Spleen (tissue), 13 donors: ENCODE measurements at regions of chr11 and their contacts with region 1.

Region 1: DNA sequence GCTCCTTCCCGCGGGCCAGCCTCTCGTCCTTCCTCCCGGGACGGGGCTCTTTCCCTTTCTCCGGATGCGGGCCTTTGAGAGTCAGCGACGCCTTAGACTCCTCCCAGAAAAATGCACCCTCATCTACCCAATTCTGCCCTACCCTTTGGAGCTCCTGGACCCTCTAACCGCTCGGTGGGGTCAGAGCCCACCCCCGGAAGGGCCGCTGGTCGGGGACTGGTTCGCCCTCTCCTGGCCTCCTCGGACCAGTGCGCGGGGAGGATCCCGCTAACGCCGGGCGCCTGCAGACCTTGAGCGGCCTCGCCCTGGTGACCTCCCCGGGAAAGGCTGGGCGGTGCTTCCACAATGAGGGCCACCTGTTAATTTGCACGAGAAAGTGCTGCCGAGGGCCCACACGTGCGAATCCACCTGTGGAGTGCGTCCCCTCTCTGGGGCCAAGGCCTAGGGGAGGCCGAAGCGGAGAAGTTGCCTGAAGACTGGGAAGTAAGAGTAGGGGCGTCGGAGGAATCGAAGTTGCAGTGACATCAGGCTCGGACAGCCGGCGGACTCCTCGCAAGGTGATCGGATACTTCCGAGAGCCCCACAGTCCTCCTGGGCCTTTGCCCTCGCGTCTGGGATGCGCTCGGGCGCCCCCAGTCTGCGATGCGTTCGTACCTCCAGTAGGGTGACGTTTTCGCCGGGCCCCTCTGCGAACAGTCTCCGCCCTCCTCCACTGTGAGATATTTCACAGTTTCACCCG is 61.5 kb downstream of the ENDOD1 start:
- DNase-seq: peak; percentile 97
- H3K4me3 ChIP-seq: peak overlapping the region; percentile 58 to 83 (median 63)
- H3K27ac ChIP-seq: peak overlapping the region; percentile 89 to 96 (median 92)
- H3K4me1 ChIP-seq: peaks cover 27 to 79% (median 54%) of the 10 kb centered on the region in 6 donors
- H3K27me3 ChIP-seq: no peaks in the 10 kb centered on the region
- CTCF ChIP-seq: peak; percentile 84 to 99 (median 94)
- POLR2A ChIP-seq: peak in 2 of 3 donors; percentile 50 to 62

Region 2: DNA sequence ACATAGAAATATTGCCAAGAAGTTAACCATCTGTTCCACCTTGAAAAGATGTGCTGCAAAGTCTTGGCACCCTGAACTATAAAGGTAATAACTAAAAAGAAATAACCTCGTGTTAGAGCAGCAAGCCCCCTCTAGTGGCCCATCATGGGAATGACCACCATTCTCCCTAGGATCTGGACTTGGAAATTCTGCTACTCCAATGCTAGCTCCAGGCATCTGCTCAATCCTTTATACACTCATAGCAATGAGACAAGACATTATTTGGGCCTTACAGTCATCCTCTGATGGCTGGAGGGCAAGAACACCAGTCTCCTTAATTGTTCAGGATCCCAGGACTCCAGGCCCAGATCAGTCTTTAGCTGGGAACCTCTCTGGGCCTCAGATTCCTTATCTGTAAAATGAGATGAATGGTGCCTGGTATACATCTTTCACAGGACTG is 253.8 kb before region 1 on chr11:
- intact Hi-C with region 1: no loop called
- DNase-seq: no peak
- H3K4me3 ChIP-seq: no peak overlapping the region
- H3K27ac ChIP-seq: no peak overlapping the region
- H3K4me1 ChIP-seq: no peaks in the 10 kb centered on the region
- H3K27me3 ChIP-seq: no peaks in the 10 kb centered on the region
- CTCF ChIP-seq: peak in 10 of 11 experiments; percentile 46 to 91 (median 78)
- POLR2A ChIP-seq: no peak

Region 3: DNA sequence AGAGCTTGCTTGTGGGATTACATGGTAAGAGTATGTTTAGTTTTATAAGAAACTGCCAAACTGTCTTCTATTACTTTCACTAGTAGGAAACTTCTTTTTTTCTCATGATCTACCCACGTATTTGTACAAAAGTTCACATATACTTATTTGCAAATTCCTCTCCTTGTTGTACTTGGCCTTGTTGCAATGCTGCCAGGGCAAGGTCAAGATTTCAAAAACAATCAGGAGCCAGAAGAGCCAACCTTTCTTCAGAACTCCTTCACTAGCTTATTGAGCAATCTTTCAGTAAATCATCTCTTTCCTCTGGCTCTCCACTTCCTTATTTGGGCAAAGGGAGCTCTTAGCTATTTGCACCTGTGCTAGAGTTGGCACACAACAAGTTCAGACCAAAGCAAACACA is 74.7 kb before region 1 on chr11:
- intact Hi-C with region 1: loop called (anchors 5 kb)
- DNase-seq: no peak
- H3K4me3 ChIP-seq: no peak overlapping the region
- H3K27ac ChIP-seq: peak overlapping the region in 5 of 8 donors; percentile 61 to 81 (median 79)
- H3K4me1 ChIP-seq: peaks cover 0 to 53% (median 27%) of the 10 kb centered on the region in 6 donors
- H3K27me3 ChIP-seq: no peaks in the 10 kb centered on the region
- CTCF ChIP-seq: no peak
- POLR2A ChIP-seq: no peak

Region 4: GRCh38 chr11:95764267-95764898 is 613.3 kb after region 1 on chr11:
- intact Hi-C with region 1: loop called (anchors 5 kb)
- DNase-seq: no peak
- H3K4me3 ChIP-seq: no peak overlapping the region
- H3K27ac ChIP-seq: no peak overlapping the region
- H3K4me1 ChIP-seq: peaks cover 0 to 25% (median 6%) of the 10 kb centered on the region in 6 donors
- H3K27me3 ChIP-seq: no peaks in the 10 kb centered on the region
- CTCF ChIP-seq: peak; percentile 56 to 80 (median 76)
- POLR2A ChIP-seq: no peak